ENCODE measurements at regions of chr10 and their contacts with region 1.

Region 1: GRCh38 chr10:29590915-29591650 is 43.7 kb downstream of the SVIL start:
- DNase-seq: no peak
- H3K4me3 ChIP-seq: no peak overlapping the region; the same call in 1 of the 2 replicates
- H3K27ac ChIP-seq: peak overlapping the region; percentile 99
- H3K4me1 ChIP-seq: peaks cover 49% of the 10 kb centered on the region
- H3K27me3 ChIP-seq: no peaks in the 10 kb centered on the region
- CTCF ChIP-seq: peak; percentile 28; the same call in 1 of the 2 replicates

Region 2: DNA sequence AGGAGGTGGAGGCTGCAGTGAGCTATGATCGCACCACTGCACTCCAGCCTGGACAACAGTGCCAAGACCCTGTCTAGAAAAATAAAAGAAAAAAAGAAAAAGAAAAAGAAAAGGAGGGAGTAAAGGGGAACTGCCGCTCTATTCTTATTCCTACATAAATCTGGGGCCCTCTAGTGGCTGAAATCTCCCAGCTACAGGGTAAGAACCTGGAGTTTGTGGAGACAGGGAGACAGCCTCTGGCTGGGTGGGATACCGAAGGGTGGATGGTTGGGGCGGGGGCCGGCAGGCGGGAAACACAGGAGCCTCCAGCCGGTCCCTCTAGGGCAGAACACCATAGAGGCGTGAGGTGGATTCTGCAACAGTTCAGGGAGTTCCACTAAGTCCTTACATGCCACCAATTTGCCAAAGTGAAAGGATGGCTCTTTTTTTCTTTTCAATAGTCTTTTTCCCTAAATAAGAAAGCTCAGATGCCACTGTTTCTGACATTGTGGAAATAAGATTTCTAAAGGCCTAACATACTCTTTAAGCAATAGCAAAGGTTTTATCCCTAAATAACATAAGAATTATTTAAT is 73.6 kb before region 1 on chr10:
- CTCF ChIA-PET with region 1: interaction called, 11 read pairs
- POLR2A ChIA-PET with region 1: no interaction called
- intact Hi-C with region 1: loop called (anchors 1 kb)
- DNase-seq: peak in 1 of 2 experiments; percentile 9
- H3K4me3 ChIP-seq: no peak overlapping the region
- H3K27ac ChIP-seq: no peak overlapping the region
- H3K4me1 ChIP-seq: no peaks in the 10 kb centered on the region
- H3K27me3 ChIP-seq: no peaks in the 10 kb centered on the region
- CTCF ChIP-seq: peak; percentile 64

Region 3: GRCh38 chr10:29630205-29631048 is 39.3 kb after region 1 on chr10:
- CTCF ChIA-PET with region 1: no interaction called
- POLR2A ChIA-PET with region 1: no interaction called
- intact Hi-C with region 1: loop called (anchors 1 kb)
- DNase-seq: peak; percentile 55 to 98
- H3K4me3 ChIP-seq: peak overlapping the region; percentile 35; the same call in 1 of the 2 replicates
- H3K27ac ChIP-seq: peak overlapping the region; percentile 98
- H3K4me1 ChIP-seq: peaks cover 81% of the 10 kb centered on the region
- H3K27me3 ChIP-seq: no peaks in the 10 kb centered on the region
- CTCF ChIP-seq: no peak

Region 4: GRCh38 chr10:29669149-29669548 is 78.1 kb after region 1 on chr10:
- CTCF ChIA-PET with region 1: no interaction called
- POLR2A ChIA-PET with region 1: interaction called, 5 read pairs
- intact Hi-C with region 1: loop called (anchors 2 kb)
- DNase-seq: no peak
- H3K4me3 ChIP-seq: no peak overlapping the region
- H3K27ac ChIP-seq: peak overlapping the region; percentile 62
- H3K4me1 ChIP-seq: peaks cover 29% of the 10 kb centered on the region
- H3K27me3 ChIP-seq: no peaks in the 10 kb centered on the region
- CTCF ChIP-seq: no peak

Region 5: GRCh38 chr10:29804025-29804852 is 213.2 kb after region 1 on chr10:
- CTCF ChIA-PET with region 1: no interaction called
- POLR2A ChIA-PET with region 1: no interaction called
- intact Hi-C with region 1: loop called (anchors 2 kb)
- DNase-seq: peak; percentile 86 to 96
- H3K4me3 ChIP-seq: peak overlapping the region; percentile 38; the same call in 1 of the 2 replicates
- H3K27ac ChIP-seq: peak overlapping the region; percentile 100
- H3K4me1 ChIP-seq: peaks cover 69% of the 10 kb centered on the region
- H3K27me3 ChIP-seq: no peaks in the 10 kb centered on the region
- CTCF ChIP-seq: no peak

Measured in PC-9 (cell line).